AG04450 (cell line): ENCODE measurements at regions of chr2 and their contacts with region 1.

Region 1: GRCh38 chr2:26959331-26959730 is 11.1 kb upstream of the MAPRE3 start:
- DNase-seq: no peak
- H3K4me3 ChIP-seq: no peak overlapping the region
- H3K27ac ChIP-seq: no peak overlapping the region
- H3K27me3 ChIP-seq: peaks cover 46% of the 10 kb centered on the region
- CTCF ChIP-seq: no peak

Region 2: GRCh38 chr2:26970921-26971627 is 11.7 kb after region 1 on chr2:
- CTCF ChIA-PET with region 1: interaction called, 16 read pairs
- POLR2A ChIA-PET with region 1: no interaction called
- DNase-seq: no peak
- H3K4me3 ChIP-seq: peak overlapping the region; percentile 86
- H3K27ac ChIP-seq: peak overlapping the region; percentile 31
- H3K27me3 ChIP-seq: no peaks in the 10 kb centered on the region
- CTCF ChIP-seq: no peak